ENCODE measurements at regions of chr2 and their contacts with region 1.

Region 1: DNA sequence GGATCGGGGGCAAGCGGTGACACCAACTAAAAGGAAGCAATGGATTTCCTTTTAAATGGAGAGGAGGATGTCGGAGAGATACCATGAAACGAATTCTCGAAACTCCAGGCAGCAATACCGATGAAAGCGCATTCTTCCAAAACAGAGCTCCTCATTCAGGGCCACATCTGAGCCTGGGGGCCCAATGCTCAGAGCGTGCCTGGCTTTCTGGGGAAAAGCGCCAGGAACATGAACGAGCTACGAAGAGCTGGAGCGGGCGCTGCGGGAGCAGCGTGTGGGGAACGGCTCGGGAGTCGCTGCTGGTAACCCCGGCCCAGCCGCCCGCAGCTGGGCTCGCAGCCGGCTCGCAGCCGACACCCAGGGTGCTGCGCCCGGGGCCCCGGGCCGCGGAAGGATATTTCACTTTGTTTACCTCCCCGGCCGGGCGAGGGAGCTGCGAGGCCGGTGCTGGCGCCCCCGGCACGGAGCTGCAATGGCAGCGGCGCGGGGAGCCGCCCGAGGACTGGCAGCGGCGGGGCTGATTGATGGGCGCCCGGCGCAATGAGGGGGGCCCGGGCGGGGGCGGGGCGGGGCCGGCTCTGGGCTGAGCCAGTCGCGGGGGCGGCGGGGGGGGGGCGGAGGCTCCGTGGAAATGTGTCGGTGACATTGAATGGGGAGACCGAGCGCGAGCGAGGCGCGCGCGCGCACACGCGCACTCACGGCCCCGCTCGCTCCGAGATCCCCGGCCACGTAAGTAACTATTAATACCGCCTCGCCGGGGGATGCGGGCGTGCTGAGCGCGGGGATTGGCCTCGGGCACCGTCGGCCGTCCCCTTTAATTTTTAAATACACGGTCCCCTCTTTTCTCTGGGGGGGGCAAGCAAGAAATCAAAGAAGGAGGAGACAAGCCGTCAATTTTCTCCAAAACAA is at the start of gene TRIB2:
- DNase-seq: peak; percentile 85
- H3K4me3 ChIP-seq: peak within 1 kb of the TSS; percentile 80 to 95 (median 82)
- H3K27ac ChIP-seq: peak within 1 kb of the TSS; percentile 89
- H3K4me1 ChIP-seq: peaks cover 30% of the 10 kb centered on the region
- H3K27me3 ChIP-seq: no peaks in the 10 kb centered on the region
- CTCF ChIP-seq: peak in 1 of 2 donors; percentile 1
- POLR2A ChIP-seq: peak; percentile 67
- total RNA-seq, gene TRIB2: 17.6 and 20.5 TPM in 2 replicates

Region 2: DNA sequence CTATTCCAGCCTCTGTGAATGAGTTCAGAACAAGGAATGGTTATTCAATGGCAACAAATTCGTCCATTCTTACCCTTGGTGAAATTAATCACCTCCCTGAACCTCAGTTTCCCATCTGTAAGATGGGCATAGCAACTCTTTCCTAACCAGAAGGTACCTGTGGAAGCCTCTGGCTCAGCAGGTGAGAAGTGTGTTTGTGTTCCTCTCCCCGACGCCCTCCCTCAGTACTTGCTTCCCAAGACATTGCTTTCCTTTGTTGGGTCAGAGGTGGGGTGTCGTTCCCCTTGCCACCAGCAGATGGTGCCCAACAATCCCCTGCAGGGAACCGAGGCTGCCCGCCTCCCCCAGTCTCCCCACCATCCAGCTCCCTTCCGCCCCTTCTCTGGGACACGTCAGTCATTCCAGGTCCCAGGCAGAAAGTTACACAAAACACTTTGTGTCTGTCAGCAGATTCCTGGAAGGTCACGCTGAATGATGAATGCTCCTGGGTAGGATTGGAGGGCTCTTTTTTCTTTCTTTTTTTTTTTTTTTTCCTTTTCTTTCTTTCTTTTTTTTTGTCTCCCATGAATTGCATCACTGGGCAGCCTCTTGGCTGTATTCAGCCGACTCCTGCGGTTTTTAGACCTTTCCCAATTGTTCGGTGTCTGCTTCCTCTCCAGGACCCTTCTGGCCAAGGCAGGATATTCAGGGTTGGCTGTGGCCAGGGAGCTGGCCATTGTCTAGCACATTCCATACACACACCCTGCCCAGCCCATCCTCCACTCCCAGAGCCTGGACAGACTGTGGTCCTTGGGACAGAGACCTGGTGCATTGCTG is 852.8 kb before region 1 on chr2:
- CTCF ChIA-PET with region 1: interaction called, 43 read pairs
- POLR2A ChIA-PET with region 1: no interaction called
- dilution Hi-C with region 1: no loop called
- intact Hi-C with region 1: loop called (anchors 1 kb)
- DNase-seq: peak; percentile 88
- H3K4me3 ChIP-seq: no peak overlapping the region
- H3K27ac ChIP-seq: no peak overlapping the region
- H3K4me1 ChIP-seq: peaks cover 7% of the 10 kb centered on the region
- H3K27me3 ChIP-seq: peaks cover 3 to 11% of the 10 kb centered on the region in 2 experiments
- CTCF ChIP-seq: peak; percentile 80 to 93
- POLR2A ChIP-seq: no peak

Region 3: GRCh38 chr2:12131975-12132374 is 584.6 kb before region 1 on chr2:
- CTCF ChIA-PET with region 1: no interaction called
- POLR2A ChIA-PET with region 1: no interaction called
- dilution Hi-C with region 1: no loop called
- intact Hi-C with region 1: no loop called
- DNase-seq: no peak
- H3K4me3 ChIP-seq: no peak overlapping the region
- H3K27ac ChIP-seq: no peak overlapping the region
- H3K4me1 ChIP-seq: no peaks in the 10 kb centered on the region
- H3K27me3 ChIP-seq: no peaks in the 10 kb centered on the region
- CTCF ChIP-seq: no peak
- POLR2A ChIP-seq: no peak

Region 4: GRCh38 chr2:12282780-12283695 is 433.5 kb before region 1 on chr2:
- CTCF ChIA-PET with region 1: interaction called, 10 read pairs
- POLR2A ChIA-PET with region 1: no interaction called
- dilution Hi-C with region 1: no loop called
- intact Hi-C with region 1: loop called (anchors 5 kb)
- DNase-seq: no peak
- H3K4me3 ChIP-seq: no peak overlapping the region
- H3K27ac ChIP-seq: no peak overlapping the region
- H3K4me1 ChIP-seq: peaks cover 15% of the 10 kb centered on the region
- H3K27me3 ChIP-seq: no peaks in the 10 kb centered on the region
- CTCF ChIP-seq: no peak
- POLR2A ChIP-seq: no peak

Region 5: DNA sequence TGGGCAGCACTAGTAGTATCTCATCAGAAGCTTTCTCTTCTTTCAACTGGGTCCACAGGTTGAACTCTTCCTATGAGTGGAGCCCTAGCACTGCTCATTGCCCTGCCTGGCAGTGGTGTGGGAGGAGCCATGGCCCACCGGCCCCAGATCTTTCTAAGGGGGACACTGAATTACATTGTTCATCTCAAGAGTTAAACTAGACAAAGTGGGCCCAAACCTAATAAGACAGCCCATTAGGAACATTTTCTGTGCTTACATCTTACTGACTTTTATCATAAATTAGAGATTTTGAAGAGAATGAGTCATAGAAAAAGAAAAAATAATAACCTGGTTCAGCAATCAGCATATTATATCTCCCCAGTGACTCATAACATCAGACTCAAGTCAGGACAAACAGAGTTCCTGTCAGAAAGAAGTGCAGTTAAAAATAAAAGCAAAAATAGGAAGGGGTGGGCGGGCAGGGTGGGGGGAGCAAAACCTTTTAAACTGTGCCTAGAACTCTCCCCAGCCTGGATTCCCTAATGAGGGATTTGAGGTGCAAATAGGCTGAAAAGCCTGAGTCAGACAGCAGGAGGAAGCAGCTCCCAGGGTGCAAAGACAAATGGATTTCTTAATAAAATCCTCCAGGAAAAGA is 161.4 kb before region 1 on chr2:
- CTCF ChIA-PET with region 1: interaction called, 30 read pairs
- POLR2A ChIA-PET with region 1: interaction called, 4 read pairs
- dilution Hi-C with region 1: loop called (anchors 25 kb)
- intact Hi-C with region 1: loop called (anchors 1 kb)
- DNase-seq: peak; percentile 85
- H3K4me3 ChIP-seq: no peak overlapping the region
- H3K27ac ChIP-seq: no peak overlapping the region
- H3K4me1 ChIP-seq: peaks cover 23% of the 10 kb centered on the region
- H3K27me3 ChIP-seq: no peaks in the 10 kb centered on the region
- CTCF ChIP-seq: no peak
- POLR2A ChIP-seq: no peak

Region 6: DNA sequence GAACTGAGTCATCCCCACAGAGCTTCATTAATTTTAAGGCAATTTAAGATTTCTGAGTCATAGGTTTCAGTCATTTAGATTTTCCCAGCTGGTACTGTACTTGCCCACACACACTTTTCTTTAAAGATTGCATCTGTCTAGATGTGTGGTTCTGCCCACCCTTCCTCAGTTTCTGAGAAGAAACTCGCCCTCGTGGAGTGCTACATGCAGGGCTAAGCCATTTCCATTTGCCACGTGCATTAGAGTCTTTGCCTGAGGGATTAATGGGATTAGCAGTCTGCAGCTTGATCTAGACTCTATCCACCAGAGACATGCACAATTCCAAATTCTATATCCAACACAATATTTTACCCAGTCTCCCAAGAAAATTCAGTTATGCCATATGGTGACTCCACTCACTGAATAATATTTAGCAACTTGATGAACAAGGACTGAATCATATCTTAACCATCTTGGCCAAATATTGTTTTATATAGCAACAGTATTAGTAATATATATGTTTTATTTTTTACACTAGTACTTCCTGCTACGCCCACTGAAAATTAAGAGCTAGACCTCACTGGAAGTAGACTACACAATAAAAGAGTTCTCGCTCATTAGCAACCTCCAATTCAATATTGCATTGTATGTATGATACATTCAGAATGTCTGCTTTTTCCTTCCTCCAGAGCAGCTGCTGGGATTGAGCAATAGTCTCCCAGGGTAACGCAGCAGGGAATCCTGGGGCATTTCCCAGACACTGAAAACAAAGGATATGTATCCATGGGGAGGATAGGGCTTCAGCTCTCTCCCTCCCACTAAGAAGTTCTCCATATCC is 14.0 kb before region 1 on chr2:
- CTCF ChIA-PET with region 1: interaction called, 26 read pairs
- POLR2A ChIA-PET with region 1: no interaction called
- dilution Hi-C with region 1: no loop called
- intact Hi-C with region 1: loop called (anchors 1 kb)
- DNase-seq: peak; percentile 93
- H3K4me3 ChIP-seq: no peak overlapping the region
- H3K27ac ChIP-seq: peak overlapping the region; percentile 32
- H3K4me1 ChIP-seq: peaks cover 12% of the 10 kb centered on the region
- H3K27me3 ChIP-seq: no peaks in the 10 kb centered on the region
- CTCF ChIP-seq: no peak
- POLR2A ChIP-seq: no peak

Region 7: GRCh38 chr2:12856934-12857601 is 140.5 kb after region 1 on chr2:
- CTCF ChIA-PET with region 1: interaction called, 8 read pairs
- POLR2A ChIA-PET with region 1: no interaction called
- dilution Hi-C with region 1: no loop called
- intact Hi-C with region 1: loop called (anchors 1 kb)
- DNase-seq: peak; percentile 81
- H3K4me3 ChIP-seq: peak overlapping the region in 1 of 3 experiments; percentile 23
- H3K27ac ChIP-seq: peak overlapping the region; percentile 91
- H3K4me1 ChIP-seq: peaks cover 27% of the 10 kb centered on the region
- H3K27me3 ChIP-seq: no peaks in the 10 kb centered on the region
- CTCF ChIP-seq: no peak
- POLR2A ChIP-seq: peak; percentile 38

Region 8: GRCh38 chr2:13006829-13007717 is 290.5 kb after region 1 on chr2:
- CTCF ChIA-PET with region 1: interaction called, 135 read pairs
- POLR2A ChIA-PET with region 1: no interaction called
- dilution Hi-C with region 1: no loop called
- intact Hi-C with region 1: loop called (anchors 1 kb)
- DNase-seq: peak; percentile 83
- H3K4me3 ChIP-seq: no peak overlapping the region
- H3K27ac ChIP-seq: no peak overlapping the region
- H3K4me1 ChIP-seq: peaks cover 19% of the 10 kb centered on the region
- H3K27me3 ChIP-seq: peaks cover 0 to 3% of the 10 kb centered on the region in 2 experiments
- CTCF ChIP-seq: peak; percentile 63 to 71
- POLR2A ChIP-seq: no peak